GM12878 (cell line): ENCODE measurements at regions of chr20 and their contacts with region 1.

Region 1: GRCh38 chr20:6828794-6829423 is 61.4 kb downstream of the BMP2 start:
- DNase-seq: peak; percentile 30
- ATAC-seq: peak; percentile 92
- H3K4me3 ChIP-seq: no peak overlapping the region
- H3K27ac ChIP-seq: no peak overlapping the region
- H3K4me1 ChIP-seq: no peaks in the 10 kb centered on the region
- H3K27me3 ChIP-seq: no peaks in the 10 kb centered on the region; a peak in 1 of 4 replicates
- CTCF ChIP-seq: peak; percentile 57 to 72 (median 63)
- EP300 ChIP-seq: no peak
- POLR2A ChIP-seq: no peak
- RAD21 ChIP-seq: peak; percentile 75

Region 2: DNA sequence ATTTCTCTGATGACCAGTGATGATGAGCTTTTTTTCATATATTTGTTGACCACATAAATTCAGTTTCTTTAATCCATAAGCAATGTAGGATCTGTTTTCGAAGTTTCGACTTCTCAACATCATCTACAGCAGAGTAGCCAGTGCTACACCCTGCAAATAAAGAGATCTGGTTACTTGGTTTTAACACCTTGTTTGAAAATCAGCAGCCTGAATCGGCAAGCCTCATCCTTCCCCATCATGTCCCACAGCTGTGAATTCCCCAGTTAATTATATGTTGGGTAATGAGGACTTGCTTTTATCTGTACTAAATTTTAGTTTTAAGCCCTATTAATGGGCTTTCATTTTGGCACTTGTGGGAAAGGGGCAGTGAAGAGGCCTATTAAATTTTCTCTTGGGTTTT is 19.1 kb after region 1 on chr20:
- CTCF ChIA-PET with region 1: interaction called, 19 read pairs
- POLR2A ChIA-PET with region 1: interaction called, 3 read pairs
- RAD21 ChIA-PET with region 1: interaction called, 20 read pairs
- SMC1A ChIA-PET with region 1: interaction called, 270 read pairs
- in situ Hi-C with region 1: no loop called
- intact Hi-C with region 1: no loop called
- DNase-seq: no peak
- ATAC-seq: peak; percentile 62
- H3K4me3 ChIP-seq: no peak overlapping the region
- H3K27ac ChIP-seq: no peak overlapping the region
- H3K4me1 ChIP-seq: no peaks in the 10 kb centered on the region
- H3K27me3 ChIP-seq: no peaks in the 10 kb centered on the region
- CTCF ChIP-seq: no peak
- EP300 ChIP-seq: peak; percentile 28 to 51; a peak in 1 of 4 replicates
- POLR2A ChIP-seq: no peak
- RAD21 ChIP-seq: no peak

Region 3: DNA sequence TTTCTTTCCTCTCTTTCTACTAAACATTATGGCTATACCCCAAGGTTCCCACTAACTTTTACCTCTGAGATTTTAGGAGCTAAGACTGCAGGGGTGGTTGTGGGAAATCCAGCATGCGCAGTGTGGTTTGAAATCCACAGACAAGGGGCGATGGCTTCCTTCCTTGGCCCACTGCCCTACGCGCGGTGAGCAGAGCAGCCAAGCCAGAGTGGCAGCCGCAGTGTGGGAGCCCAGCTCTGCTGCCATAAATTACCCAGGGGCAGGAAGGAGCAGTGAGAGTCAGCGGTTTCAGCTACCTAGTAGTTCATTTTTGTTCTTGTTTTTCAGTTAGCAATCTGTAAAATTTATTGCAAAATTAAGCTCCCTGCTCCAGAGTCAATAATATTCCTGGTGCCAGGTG is 40.0 kb after region 1 on chr20:
- CTCF ChIA-PET with region 1: interaction called, 11 read pairs
- POLR2A ChIA-PET with region 1: no interaction called
- RAD21 ChIA-PET with region 1: interaction called, 7 read pairs
- SMC1A ChIA-PET with region 1: interaction called, 270 read pairs
- in situ Hi-C with region 1: no loop called
- intact Hi-C with region 1: no loop called
- DNase-seq: no peak
- ATAC-seq: peak; percentile 68
- H3K4me3 ChIP-seq: no peak overlapping the region
- H3K27ac ChIP-seq: no peak overlapping the region
- H3K4me1 ChIP-seq: no peaks in the 10 kb centered on the region
- H3K27me3 ChIP-seq: no peaks in the 10 kb centered on the region; a peak in 1 of 4 replicates
- CTCF ChIP-seq: no peak
- EP300 ChIP-seq: no peak
- POLR2A ChIP-seq: no peak
- RAD21 ChIP-seq: no peak

Region 4: DNA sequence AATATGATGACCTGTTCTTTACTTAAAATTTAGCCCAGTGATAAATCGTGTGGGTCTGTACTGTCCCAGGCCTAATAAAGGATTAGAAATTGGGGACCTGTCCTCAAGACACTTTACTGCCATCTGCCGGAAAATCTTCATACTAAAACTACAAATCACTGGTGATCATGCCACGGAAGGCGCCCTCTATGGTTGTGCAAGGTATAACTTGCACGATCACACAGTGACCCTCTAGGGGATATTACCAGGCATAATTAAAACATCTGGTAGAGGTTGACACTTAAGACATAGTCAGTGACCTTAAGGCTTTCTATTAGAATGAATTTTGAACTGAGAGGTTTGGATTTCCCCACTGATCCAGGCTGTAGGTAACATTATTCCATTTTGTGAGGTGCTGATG is 111.1 kb after region 1 on chr20:
- CTCF ChIA-PET with region 1: interaction called, 118 read pairs
- POLR2A ChIA-PET with region 1: interaction called, 3 read pairs
- RAD21 ChIA-PET with region 1: interaction called, 33 read pairs
- SMC1A ChIA-PET with region 1: interaction called, 29 read pairs
- in situ Hi-C with region 1: no loop called
- intact Hi-C with region 1: loop called (anchors 1 kb)
- DNase-seq: no peak
- ATAC-seq: peak; percentile 80
- H3K4me3 ChIP-seq: no peak overlapping the region
- H3K27ac ChIP-seq: no peak overlapping the region
- H3K4me1 ChIP-seq: no peaks in the 10 kb centered on the region
- H3K27me3 ChIP-seq: no peaks in the 10 kb centered on the region
- CTCF ChIP-seq: peak; percentile 16 to 61 (median 28); a peak in 4 of 6 replicates
- EP300 ChIP-seq: no peak
- POLR2A ChIP-seq: no peak
- RAD21 ChIP-seq: peak; percentile 16; the same call in 1 of the 2 replicates

Region 5: GRCh38 chr20:6979621-6980020 is 150.7 kb after region 1 on chr20:
- CTCF ChIA-PET with region 1: no interaction called
- POLR2A ChIA-PET with region 1: no interaction called
- RAD21 ChIA-PET with region 1: no interaction called
- SMC1A ChIA-PET with region 1: no interaction called
- in situ Hi-C with region 1: no loop called
- intact Hi-C with region 1: no loop called
- DNase-seq: no peak
- ATAC-seq: no peak
- H3K4me3 ChIP-seq: no peak overlapping the region
- H3K27ac ChIP-seq: no peak overlapping the region
- H3K4me1 ChIP-seq: no peaks in the 10 kb centered on the region
- H3K27me3 ChIP-seq: no peaks in the 10 kb centered on the region
- CTCF ChIP-seq: no peak
- EP300 ChIP-seq: no peak
- POLR2A ChIP-seq: no peak
- RAD21 ChIP-seq: no peak

Region 6: DNA sequence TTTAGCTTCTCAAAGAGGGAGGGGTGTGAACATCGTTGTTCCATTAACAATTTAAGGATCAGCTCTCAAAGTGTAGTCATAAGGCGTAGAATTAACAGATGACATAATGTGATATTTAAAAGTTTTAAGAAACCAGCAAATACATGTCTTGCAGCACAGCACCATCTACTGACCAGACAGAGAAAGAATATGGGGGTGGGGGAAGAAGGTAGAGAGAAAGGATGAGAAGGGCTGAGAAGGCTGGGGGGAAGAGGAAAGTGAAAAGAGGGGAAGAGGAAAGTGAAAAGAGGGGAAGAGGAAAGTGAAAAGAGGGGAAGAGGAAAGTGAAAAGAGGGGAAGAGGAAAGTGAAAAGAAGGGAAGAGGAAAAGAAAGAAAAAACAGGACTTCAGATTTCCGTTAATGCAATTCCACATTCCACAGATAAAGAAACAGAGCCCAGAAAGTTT is 1030.5 kb after region 1 on chr20:
- CTCF ChIA-PET with region 1: no interaction called
- POLR2A ChIA-PET with region 1: no interaction called
- RAD21 ChIA-PET with region 1: no interaction called
- SMC1A ChIA-PET with region 1: no interaction called
- in situ Hi-C with region 1: loop called (anchors 10 kb)
- intact Hi-C with region 1: loop called (anchors 5 kb)
- DNase-seq: peak; percentile 8
- ATAC-seq: peak; percentile 68
- H3K4me3 ChIP-seq: no peak overlapping the region
- H3K27ac ChIP-seq: no peak overlapping the region
- H3K4me1 ChIP-seq: no peaks in the 10 kb centered on the region
- H3K27me3 ChIP-seq: no peaks in the 10 kb centered on the region
- CTCF ChIP-seq: peak; percentile 50 to 66 (median 51); a peak in 5 of 6 replicates
- EP300 ChIP-seq: no peak
- POLR2A ChIP-seq: no peak
- RAD21 ChIP-seq: peak; percentile 93